Activated CD4-positive, alpha-beta memory T cell treated with anti-CD3 and anti-CD28 coated beads for 36 hours (primary cell): ENCODE measurements at regions of chr22 and their contacts with region 1.

Region 1: GRCh38 chr22:40024201-40025061 is 29.7 kb downstream of the FAM83F start:
- DNase-seq: peak; percentile 76
- H3K4me3 Mint-ChIP-seq: no peak overlapping the region
- H3K27ac Mint-ChIP-seq: no peak overlapping the region
- H3K4me1 Mint-ChIP-seq: no peaks in the 10 kb centered on the region
- H3K27me3 Mint-ChIP-seq: no peaks in the 10 kb centered on the region

Region 2: DNA sequence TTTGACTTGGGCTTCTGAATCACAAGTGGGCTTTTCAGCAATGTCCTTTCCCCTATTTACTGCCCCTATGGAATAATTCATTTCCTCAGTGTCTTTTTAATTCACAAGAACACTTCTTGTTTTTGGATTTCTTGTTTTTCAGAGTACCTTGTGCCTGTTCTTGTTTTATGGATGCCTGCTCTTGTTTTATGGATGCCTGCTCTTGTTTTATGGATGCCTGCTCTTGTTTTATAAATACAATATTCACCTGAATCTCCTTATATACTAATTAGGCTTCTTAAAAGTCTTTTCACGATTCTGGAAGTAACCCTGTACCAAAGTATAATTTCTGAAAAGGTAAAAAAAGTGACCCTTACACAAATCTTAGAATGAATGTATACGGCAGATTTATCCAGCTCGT is 421.1 kb before region 1 on chr22:
- CTCF ChIA-PET with region 1: interaction called, 10 read pairs
- POLR2A ChIA-PET with region 1: no interaction called
- intact Hi-C with region 1: no loop called
- DNase-seq: no peak
- H3K4me3 Mint-ChIP-seq: no peak overlapping the region
- H3K27ac Mint-ChIP-seq: no peak overlapping the region
- H3K4me1 Mint-ChIP-seq: peaks cover 22% of the 10 kb centered on the region
- H3K27me3 Mint-ChIP-seq: peaks cover 3% of the 10 kb centered on the region

Region 3: GRCh38 chr22:39900306-39901227 is 123.9 kb before region 1 on chr22 and contains the start of gene GRAP2:
- CTCF ChIA-PET with region 1: interaction called, 10 read pairs
- POLR2A ChIA-PET with region 1: no interaction called
- intact Hi-C with region 1: no loop called
- DNase-seq: peak; percentile 80
- H3K4me3 Mint-ChIP-seq: peak within 1 kb of the TSS; percentile 84
- H3K27ac Mint-ChIP-seq: peak within 1 kb of the TSS; percentile 93
- H3K4me1 Mint-ChIP-seq: peaks cover 18% of the 10 kb centered on the region
- H3K27me3 Mint-ChIP-seq: no peaks in the 10 kb centered on the region
- total RNA-seq, gene GRAP2: 37.7 to 38.1 TPM

Region 4: GRCh38 chr22:39932918-39933649 is 91.3 kb before region 1 on chr22:
- CTCF ChIA-PET with region 1: interaction called, 28 read pairs
- POLR2A ChIA-PET with region 1: no interaction called
- intact Hi-C with region 1: no loop called
- DNase-seq: peak; percentile 76
- H3K4me3 Mint-ChIP-seq: peak overlapping the region; percentile 74
- H3K27ac Mint-ChIP-seq: peak overlapping the region; percentile 79
- H3K4me1 Mint-ChIP-seq: peaks cover 58% of the 10 kb centered on the region
- H3K27me3 Mint-ChIP-seq: no peaks in the 10 kb centered on the region

Region 5: GRCh38 chr22:39994566-39995392 is 29.7 kb before region 1 on chr22 and contains the start of gene FAM83F:
- CTCF ChIA-PET with region 1: interaction called, 12 read pairs
- POLR2A ChIA-PET with region 1: no interaction called
- intact Hi-C with region 1: no loop called
- DNase-seq: peak; percentile 32
- H3K4me3 Mint-ChIP-seq: peak within 1 kb of the TSS; percentile 50
- H3K27ac Mint-ChIP-seq: no peak within 1 kb of the TSS
- H3K4me1 Mint-ChIP-seq: peaks cover 7% of the 10 kb centered on the region
- H3K27me3 Mint-ChIP-seq: peaks cover 15% of the 10 kb centered on the region
- total RNA-seq, gene FAM83F: 0.26 to 0.41 TPM

Region 6: DNA sequence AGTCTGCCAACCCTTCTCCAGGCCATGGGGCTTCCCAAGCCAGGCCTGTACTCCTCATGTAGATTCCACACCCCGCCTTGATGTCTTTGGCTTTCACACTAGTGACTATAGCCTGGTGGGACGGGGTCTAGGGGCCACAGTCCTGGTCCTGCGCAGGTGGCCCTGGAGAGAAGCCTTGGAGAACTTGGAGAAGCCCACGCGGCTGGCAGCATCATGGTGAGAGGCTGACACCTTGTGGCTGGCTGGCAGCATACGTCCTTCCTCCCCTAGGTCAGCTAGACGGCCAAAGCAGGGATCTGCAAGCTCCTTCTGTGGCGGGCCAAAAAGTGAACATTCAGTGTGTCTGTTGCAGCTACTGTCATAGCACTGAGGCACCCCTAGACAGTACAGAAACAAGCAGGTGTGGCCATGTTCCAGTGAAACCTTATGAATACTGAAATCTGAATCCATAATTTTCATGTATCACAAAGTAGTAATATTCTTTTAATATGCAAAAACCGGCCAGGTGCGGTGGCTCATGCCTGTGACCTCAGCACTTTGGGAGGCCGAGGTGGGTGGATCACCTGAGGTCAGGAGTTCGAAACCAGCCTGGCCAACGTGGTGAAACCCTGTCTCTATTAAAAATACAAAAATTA is 12.3 kb after region 1 on chr22:
- CTCF ChIA-PET with region 1: interaction called, 35 read pairs
- POLR2A ChIA-PET with region 1: interaction called, 3 read pairs
- intact Hi-C with region 1: no loop called
- DNase-seq: peak; percentile 76
- H3K4me3 Mint-ChIP-seq: no peak overlapping the region
- H3K27ac Mint-ChIP-seq: no peak overlapping the region
- H3K4me1 Mint-ChIP-seq: no peaks in the 10 kb centered on the region
- H3K27me3 Mint-ChIP-seq: peaks cover 10% of the 10 kb centered on the region